GM12878 (cell line): ENCODE measurements at regions of chr5 and their contacts with region 1.

Region 1: GRCh38 chr5:128441941-128442350 is 96.1 kb downstream of the FBN2 start:
- DNase-seq: no peak
- ATAC-seq: no peak
- H3K4me3 ChIP-seq: no peak overlapping the region
- H3K27ac ChIP-seq: no peak overlapping the region
- H3K4me1 ChIP-seq: no peaks in the 10 kb centered on the region
- H3K27me3 ChIP-seq: no peaks in the 10 kb centered on the region
- CTCF ChIP-seq: no peak
- EP300 ChIP-seq: no peak
- POLR2A ChIP-seq: no peak
- RAD21 ChIP-seq: no peak

Region 2: GRCh38 chr5:127275745-127276144 is 1166.2 kb before region 1 on chr5:
- CTCF ChIA-PET with region 1: no interaction called
- POLR2A ChIA-PET with region 1: no interaction called
- RAD21 ChIA-PET with region 1: no interaction called
- SMC1A ChIA-PET with region 1: no interaction called
- in situ Hi-C with region 1: no loop called
- intact Hi-C with region 1: loop called (anchors 5 kb)
- DNase-seq: no peak
- ATAC-seq: no peak
- H3K4me3 ChIP-seq: no peak overlapping the region
- H3K27ac ChIP-seq: no peak overlapping the region
- H3K4me1 ChIP-seq: no peaks in the 10 kb centered on the region
- H3K27me3 ChIP-seq: no peaks in the 10 kb centered on the region
- CTCF ChIP-seq: no peak
- EP300 ChIP-seq: no peak
- POLR2A ChIP-seq: no peak
- RAD21 ChIP-seq: no peak